Heart right ventricle (tissue), 16 donors: ENCODE measurements at regions of chr1 and their contacts with region 1.

Region 1: DNA sequence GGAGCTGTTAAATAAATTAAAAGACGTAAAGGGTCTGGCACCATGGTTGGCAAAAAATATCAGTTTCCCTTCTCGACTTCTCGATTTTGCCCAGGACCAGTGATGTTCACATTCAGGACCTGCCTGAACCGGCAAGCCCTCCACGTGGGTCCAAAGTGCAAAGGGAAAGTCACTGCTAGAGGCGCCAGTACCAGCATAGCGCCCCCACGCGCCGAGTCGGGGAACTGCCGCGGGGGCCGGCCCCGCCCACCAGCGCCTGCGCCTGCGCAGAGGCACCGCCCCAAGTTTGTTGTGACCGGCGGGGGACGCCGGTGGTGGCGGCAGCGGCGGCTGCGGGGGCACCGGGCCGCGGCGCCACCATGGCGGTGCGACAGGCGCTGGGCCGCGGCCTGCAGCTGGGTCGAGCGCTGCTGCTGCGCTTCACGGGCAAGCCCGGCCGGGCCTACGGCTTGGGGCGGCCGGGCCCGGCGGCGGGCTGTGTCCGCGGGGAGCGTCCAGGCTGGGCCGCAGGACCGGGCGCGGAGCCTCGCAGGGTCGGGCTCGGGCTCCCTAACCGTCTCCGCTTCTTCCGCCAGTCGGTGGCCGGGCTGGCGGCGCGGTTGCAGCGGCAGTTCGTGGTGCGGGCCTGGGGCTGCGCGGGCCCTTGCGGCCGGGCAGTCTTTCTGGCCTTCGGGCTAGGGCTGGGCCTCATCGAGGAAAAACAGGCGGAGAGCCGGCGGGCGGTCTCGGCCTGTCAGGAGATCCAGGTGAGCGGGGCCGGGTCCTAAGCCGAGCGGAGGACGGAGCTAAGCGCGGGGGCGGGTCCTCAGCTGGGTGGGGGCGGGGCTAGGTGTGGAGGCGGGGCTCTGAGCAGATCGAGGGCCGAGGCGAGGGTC is at the start of gene PINK1:
- DNase-seq: peak; percentile 76 to 85
- ATAC-seq: peak; percentile 84 to 95 (median 94)
- H3K4me3 ChIP-seq: peak within 1 kb of the TSS; percentile 89 to 100 (median 96)
- H3K27ac ChIP-seq: peak within 1 kb of the TSS; percentile 93 to 99 (median 98)
- H3K4me1 ChIP-seq: peaks cover 2 to 38% (median 27%) of the 10 kb centered on the region in 9 donors
- H3K27me3 ChIP-seq: peaks cover 0 to 4% (median 0%) of the 10 kb centered on the region in 7 donors
- CTCF ChIP-seq: peak; percentile 95 to 100 (median 99)
- total RNA-seq, gene PINK1: 180 to 315 (median 244) TPM

Region 2: DNA sequence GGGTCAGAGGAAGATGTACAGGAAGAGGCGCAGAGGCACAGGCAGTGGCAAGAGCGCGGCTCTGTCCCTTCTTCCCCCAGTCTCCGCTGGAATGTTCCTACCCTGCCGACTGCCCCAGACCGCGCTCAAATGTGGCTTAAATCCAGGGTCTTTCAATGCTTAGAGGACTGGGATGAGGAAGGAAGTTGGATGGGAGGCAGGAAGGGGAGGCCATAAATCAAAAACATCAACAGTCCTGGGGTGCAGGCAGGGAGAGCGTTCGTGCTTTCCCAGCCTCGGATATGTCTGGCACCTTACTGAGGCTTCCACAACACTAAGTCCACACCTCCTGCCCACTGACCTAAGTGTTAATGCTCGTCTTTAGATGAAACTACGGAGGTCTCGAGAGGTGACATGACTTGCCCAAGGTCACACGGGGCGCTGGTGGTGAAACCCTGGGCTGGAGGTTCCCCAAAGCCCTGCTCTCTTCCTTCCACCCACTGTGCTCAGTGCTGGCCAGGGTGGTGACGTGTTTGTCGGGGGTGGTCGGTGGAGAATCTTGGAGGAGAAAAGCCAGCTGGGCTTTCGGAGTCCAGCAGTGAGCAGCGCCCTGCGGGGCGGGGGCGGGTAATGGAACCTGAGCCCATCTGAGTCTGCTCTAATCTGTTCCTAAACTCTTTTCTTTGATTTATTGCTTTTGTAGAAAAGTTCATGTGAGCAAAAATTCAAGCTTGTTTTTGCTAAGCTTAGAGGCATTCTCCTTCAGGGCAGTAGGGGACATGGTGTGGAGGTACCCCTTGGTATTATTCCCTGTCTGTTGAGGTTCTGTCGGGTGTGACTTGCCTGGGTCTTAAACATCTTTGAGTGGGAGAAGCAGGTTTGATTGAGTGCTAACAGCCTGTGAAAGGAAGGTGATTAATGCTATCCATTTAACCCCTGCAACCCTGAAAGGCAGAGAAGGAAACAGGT is 43.8 kb before region 1 on chr1:
- intact Hi-C with region 1: loop called in 1 of 10 experiments (anchors 5 kb)
- DNase-seq: peak; percentile 45 to 62
- ATAC-seq: peak; percentile 66 to 88 (median 74)
- H3K4me3 ChIP-seq: peak overlapping the region in 9 of 10 donors; percentile 13 to 51 (median 41)
- H3K27ac ChIP-seq: peak overlapping the region; percentile 60 to 85 (median 75)
- H3K4me1 ChIP-seq: peaks cover 2 to 33% (median 19%) of the 10 kb centered on the region in 9 donors
- H3K27me3 ChIP-seq: peaks cover 0 to 55% (median 26%) of the 10 kb centered on the region in 7 donors
- CTCF ChIP-seq: no peak